ENCODE measurements at regions of chr18 and their contacts with region 1.

Region 1: GRCh38 chr18:74623047-74623816 is 25.6 kb downstream of the ZNF407 start:
- DNase-seq: peak; percentile 21
- H3K4me3 ChIP-seq: no peak overlapping the region
- H3K27ac ChIP-seq: no peak overlapping the region
- H3K4me1 ChIP-seq: no peaks in the 10 kb centered on the region
- H3K27me3 ChIP-seq: no peaks in the 10 kb centered on the region
- CTCF ChIP-seq: peak; percentile 16 to 30
- POLR2A ChIP-seq: no peak

Region 2: DNA sequence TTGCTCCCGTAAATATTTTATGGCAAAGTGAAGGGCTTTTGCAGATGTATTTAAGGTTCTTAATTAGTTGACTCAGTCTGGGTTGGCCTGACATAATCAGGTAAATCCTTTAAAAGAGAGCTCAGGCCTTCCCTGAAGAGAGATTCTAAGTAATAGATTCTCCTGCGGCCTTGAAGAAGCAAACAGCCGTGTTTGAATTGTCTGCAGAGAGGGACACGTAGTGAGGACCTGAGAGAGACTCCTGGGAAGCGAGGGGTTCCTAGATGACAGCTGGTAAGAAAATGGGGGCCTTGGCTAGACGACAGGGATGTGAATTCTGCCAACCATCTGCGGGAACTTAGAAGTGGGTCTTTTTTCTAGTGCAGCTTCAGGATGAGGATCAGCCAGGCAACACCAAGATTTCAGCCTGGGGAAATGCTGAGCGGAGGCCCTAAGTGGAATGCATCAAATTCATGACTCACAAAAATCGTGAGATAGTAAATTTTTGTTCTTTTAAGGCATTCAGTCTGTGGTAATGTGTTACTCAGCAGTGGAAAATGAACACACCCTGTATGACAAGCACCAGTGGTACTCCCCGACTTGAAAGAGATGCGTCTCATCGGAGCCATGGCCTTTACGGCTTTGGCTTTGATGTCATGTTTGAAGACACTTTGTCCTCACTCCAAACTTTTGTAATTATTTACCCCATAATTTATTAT is 866.4 kb after region 1 on chr18:
- CTCF ChIA-PET with region 1: no interaction called
- POLR2A ChIA-PET with region 1: no interaction called
- dilution Hi-C with region 1: no loop called
- intact Hi-C with region 1: no loop called
- DNase-seq: no peak
- H3K4me3 ChIP-seq: no peak overlapping the region
- H3K27ac ChIP-seq: no peak overlapping the region
- H3K4me1 ChIP-seq: no peaks in the 10 kb centered on the region
- H3K27me3 ChIP-seq: no peaks in the 10 kb centered on the region
- CTCF ChIP-seq: no peak
- POLR2A ChIP-seq: no peak

Region 3: DNA sequence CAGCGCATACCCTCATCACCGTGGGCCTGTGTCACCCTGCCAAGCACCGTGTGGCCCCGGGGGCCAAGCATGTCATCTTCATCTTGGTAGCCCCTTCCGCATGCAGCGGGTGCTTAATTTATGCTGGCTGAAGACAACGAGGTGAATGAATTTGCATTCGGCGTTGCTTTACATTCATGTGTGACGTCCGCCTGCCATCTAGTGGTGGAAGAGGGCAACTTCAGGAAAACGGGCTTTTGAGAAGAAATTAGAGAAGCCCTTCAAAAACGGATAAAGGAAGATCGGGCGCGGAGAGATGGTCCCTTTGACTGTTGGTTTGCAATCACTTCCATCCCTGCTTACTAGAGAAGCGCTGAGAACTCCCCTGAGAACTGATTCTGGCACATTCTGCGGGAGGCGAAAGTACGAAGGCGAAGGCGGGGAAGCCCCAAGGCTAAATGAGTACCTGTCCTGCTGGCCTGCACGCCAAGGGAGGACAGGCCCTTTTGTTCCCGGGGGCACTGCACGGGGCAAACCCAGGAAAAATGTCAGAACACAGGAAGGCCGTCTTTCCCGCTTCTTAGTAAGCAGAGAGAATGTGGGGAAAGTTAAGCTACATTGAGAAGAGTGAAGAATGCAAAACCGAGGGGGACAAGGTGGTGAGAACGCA is 1726.0 kb after region 1 on chr18:
- CTCF ChIA-PET with region 1: interaction called, 20 read pairs
- POLR2A ChIA-PET with region 1: no interaction called
- dilution Hi-C with region 1: no loop called
- intact Hi-C with region 1: loop called (anchors 10 kb)
- DNase-seq: peak; percentile 59
- H3K4me3 ChIP-seq: no peak overlapping the region
- H3K27ac ChIP-seq: no peak overlapping the region
- H3K4me1 ChIP-seq: no peaks in the 10 kb centered on the region
- H3K27me3 ChIP-seq: no peaks in the 10 kb centered on the region
- CTCF ChIP-seq: peak; percentile 79 to 83
- POLR2A ChIP-seq: no peak